PC-3 (cell line): ENCODE measurements at regions of chr1 and their contacts with region 1.

Region 1: GRCh38 chr1:152110860-152111514 is 4.3 kb downstream of the TCHH start:
- DNase-seq: peak; percentile 50
- ATAC-seq: peak; percentile 61
- H3K4me3 ChIP-seq: peak overlapping the region; percentile 71
- H3K27ac ChIP-seq: no peak overlapping the region
- H3K4me1 ChIP-seq: peaks cover 42% of the 10 kb centered on the region
- H3K27me3 ChIP-seq: peaks cover 98% of the 10 kb centered on the region
- CTCF ChIP-seq: no peak

Region 2: GRCh38 chr1:152009693-152010092 is 101.3 kb before region 1 on chr1:
- CTCF ChIA-PET with region 1: no interaction called
- POLR2A ChIA-PET with region 1: interaction called, 29 read pairs
- intact Hi-C with region 1: no loop called
- DNase-seq: no peak
- ATAC-seq: no peak
- H3K4me3 ChIP-seq: no peak overlapping the region
- H3K27ac ChIP-seq: no peak overlapping the region
- H3K4me1 ChIP-seq: no peaks in the 10 kb centered on the region
- H3K27me3 ChIP-seq: no peaks in the 10 kb centered on the region
- CTCF ChIP-seq: no peak

Region 3: GRCh38 chr1:152162806-152163463 is 51.9 kb after region 1 on chr1:
- CTCF ChIA-PET with region 1: no interaction called
- POLR2A ChIA-PET with region 1: no interaction called
- intact Hi-C with region 1: no loop called
- DNase-seq: peak; percentile 85
- ATAC-seq: peak; percentile 92
- H3K4me3 ChIP-seq: no peak overlapping the region
- H3K27ac ChIP-seq: no peak overlapping the region
- H3K4me1 ChIP-seq: peaks cover 28% of the 10 kb centered on the region
- H3K27me3 ChIP-seq: no peaks in the 10 kb centered on the region
- CTCF ChIP-seq: no peak